Breast epithelium (tissue), 4 donors: ENCODE measurements at regions of chr5 and their contacts with region 1.

Region 1: GRCh38 chr5:167723254-167723871 is 568.1 kb upstream of the WWC1 start:
- DNase-seq: peak; percentile 64 to 70
- H3K4me3 ChIP-seq: no peak overlapping the region
- H3K27ac ChIP-seq: no peak overlapping the region
- H3K4me1 ChIP-seq: no peaks in the 10 kb centered on the region
- H3K27me3 ChIP-seq: no peaks in the 10 kb centered on the region
- CTCF ChIP-seq: peak; percentile 37 to 81 (median 77)
- POLR2A ChIP-seq: no peak

Region 2: GRCh38 chr5:167709625-167710024 is 13.7 kb before region 1 on chr5:
- intact Hi-C with region 1: no loop called
- DNase-seq: no peak
- H3K4me3 ChIP-seq: no peak overlapping the region
- H3K27ac ChIP-seq: no peak overlapping the region
- H3K4me1 ChIP-seq: no peaks in the 10 kb centered on the region
- H3K27me3 ChIP-seq: no peaks in the 10 kb centered on the region
- CTCF ChIP-seq: no peak
- POLR2A ChIP-seq: no peak

Region 3: DNA sequence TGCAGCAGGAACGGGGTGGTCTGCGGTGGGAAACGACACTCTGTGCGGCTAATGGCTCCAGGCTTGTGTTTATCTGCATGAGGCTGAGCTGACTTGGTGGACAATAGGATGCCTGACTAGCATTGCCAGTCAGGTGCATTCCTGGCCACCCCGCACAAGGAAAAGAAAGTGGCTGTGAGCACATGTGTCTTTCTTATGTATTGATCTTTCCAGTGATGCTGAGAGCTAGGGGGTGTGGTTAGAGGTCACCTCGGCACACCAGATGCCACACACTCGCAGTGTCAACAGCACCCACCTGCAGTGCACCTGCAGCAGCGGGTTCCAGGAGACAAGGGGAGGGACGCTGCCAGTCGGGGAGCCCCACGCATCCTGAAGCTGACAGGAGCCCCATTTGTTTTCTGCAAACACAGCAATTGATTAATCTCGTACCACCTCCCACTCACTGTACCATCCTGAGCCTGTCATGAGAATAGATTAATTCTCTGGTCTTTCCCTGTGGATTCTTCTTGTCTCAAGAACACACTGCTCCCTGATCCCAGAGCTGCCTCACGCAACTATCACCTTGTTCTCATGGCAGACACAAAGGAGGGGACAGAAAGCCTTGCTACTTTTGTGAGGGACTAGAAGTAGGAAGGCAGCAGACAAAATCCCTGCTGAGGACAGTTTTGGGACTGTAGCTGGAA is 316.3 kb after region 1 on chr5:
- intact Hi-C with region 1: loop called (anchors 5 kb)
- DNase-seq: no peak
- H3K4me3 ChIP-seq: no peak overlapping the region
- H3K27ac ChIP-seq: no peak overlapping the region
- H3K4me1 ChIP-seq: no peaks in the 10 kb centered on the region
- H3K27me3 ChIP-seq: peaks cover 0 to 9% of the 10 kb centered on the region in 2 donors
- CTCF ChIP-seq: no peak
- POLR2A ChIP-seq: no peak

Region 4: DNA sequence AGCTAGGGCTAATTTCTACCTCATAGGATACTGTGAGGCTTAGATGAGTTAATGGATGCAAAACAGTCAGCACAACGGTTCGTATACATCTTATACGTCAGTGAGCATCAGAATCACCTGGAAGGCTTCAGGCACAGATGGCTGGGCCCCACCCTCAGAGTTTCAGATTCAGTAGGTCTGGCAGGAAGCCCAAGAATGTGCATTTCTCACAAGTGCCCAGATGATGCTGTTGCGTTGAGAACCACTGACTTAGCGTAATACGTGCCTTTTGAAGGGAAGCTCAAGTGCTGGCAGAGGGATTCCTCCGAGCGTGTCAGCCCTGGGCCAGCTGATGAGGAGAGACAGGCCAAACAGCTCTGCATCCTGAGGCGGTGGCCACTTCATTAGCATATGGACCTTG is 451.0 kb after region 1 on chr5:
- intact Hi-C with region 1: loop called (anchors 5 kb)
- DNase-seq: no peak
- H3K4me3 ChIP-seq: no peak overlapping the region
- H3K27ac ChIP-seq: no peak overlapping the region
- H3K4me1 ChIP-seq: no peaks in the 10 kb centered on the region
- H3K27me3 ChIP-seq: no peaks in the 10 kb centered on the region
- CTCF ChIP-seq: no peak
- POLR2A ChIP-seq: no peak

Region 5: DNA sequence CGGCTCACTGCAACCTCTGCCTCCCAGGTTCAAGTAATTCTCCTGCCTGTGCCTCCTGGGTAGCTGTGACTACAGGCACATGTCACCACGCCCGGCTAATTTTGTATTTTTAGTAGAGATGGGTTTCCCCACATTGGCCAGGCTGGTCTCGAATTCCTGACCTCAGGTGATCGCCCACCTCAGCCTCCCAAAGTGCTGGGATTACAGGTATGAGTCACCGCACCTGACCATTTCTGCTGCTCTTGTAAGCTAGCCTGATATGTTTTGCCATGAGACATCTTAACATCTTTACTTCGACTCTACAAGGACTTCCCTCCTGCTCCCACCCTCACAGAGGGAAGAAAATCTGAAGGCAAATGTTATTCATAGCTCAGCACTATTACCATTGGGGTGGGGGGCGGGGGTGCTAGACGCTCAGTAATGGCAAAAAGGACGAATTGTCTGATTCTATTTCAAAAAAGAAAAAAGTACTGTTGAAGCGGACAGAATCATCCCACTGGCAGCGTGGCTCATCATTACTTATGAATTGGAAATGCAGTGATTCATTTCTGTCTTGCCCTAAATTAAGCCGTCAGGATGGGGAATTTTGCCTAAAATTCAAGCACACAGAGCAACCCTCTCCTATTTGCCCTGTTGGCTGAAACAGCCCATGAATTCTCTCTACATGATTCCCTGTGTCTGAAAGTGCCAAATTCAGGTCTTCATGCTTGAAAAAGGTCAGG is 521.6 kb after region 1 on chr5:
- intact Hi-C with region 1: no loop called
- DNase-seq: no peak
- H3K4me3 ChIP-seq: no peak overlapping the region
- H3K27ac ChIP-seq: no peak overlapping the region
- H3K4me1 ChIP-seq: no peaks in the 10 kb centered on the region
- H3K27me3 ChIP-seq: no peaks in the 10 kb centered on the region
- CTCF ChIP-seq: no peak
- POLR2A ChIP-seq: no peak